OCI-LY7 (cell line): ENCODE measurements at regions of chr18 and their contacts with region 1.

Region 1: GRCh38 chr18:21330122-21330701 is 88.2 kb downstream of the GREB1L start:
- DNase-seq: no peak
- H3K4me3 ChIP-seq: no peak overlapping the region
- H3K27ac ChIP-seq: no peak overlapping the region
- H3K4me1 ChIP-seq: no peaks in the 10 kb centered on the region
- CTCF ChIP-seq: no peak

Region 2: GRCh38 chr18:21191596-21192307 is 138.5 kb before region 1 on chr18:
- CTCF ChIA-PET with region 1: no interaction called
- POLR2A ChIA-PET with region 1: no interaction called
- intact Hi-C with region 1: loop called (anchors 10 kb)
- DNase-seq: peak; percentile 30
- H3K4me3 ChIP-seq: no peak overlapping the region
- H3K27ac ChIP-seq: no peak overlapping the region
- H3K4me1 ChIP-seq: no peaks in the 10 kb centered on the region
- CTCF ChIP-seq: peak; percentile 77

Region 3: DNA sequence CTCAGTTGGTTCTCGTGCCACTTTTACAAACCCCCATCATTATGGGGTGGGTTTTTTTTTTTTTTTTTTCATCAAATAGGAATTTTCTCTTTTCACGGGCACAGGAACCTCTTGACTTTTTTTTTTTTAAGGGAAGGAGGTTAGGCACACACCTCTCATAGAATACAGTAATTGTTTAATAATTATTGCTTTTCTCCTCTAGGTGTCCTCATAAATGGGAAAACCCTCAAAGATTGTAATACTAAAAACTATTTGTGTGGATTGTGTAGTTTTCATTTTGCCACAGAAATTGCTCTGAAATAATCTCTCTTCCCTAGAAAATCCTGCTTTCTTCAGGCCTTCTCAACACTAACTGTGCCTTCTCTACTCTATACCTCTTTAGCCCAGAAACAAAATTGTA is 59.1 kb after region 1 on chr18:
- CTCF ChIA-PET with region 1: no interaction called
- POLR2A ChIA-PET with region 1: no interaction called
- intact Hi-C with region 1: loop called (anchors 10 kb)
- DNase-seq: no peak
- H3K4me3 ChIP-seq: no peak overlapping the region
- H3K27ac ChIP-seq: no peak overlapping the region
- H3K4me1 ChIP-seq: no peaks in the 10 kb centered on the region
- CTCF ChIP-seq: peak; percentile 48